ENCODE measurements at regions of chr17 and their contacts with region 1.

Region 1: DNA sequence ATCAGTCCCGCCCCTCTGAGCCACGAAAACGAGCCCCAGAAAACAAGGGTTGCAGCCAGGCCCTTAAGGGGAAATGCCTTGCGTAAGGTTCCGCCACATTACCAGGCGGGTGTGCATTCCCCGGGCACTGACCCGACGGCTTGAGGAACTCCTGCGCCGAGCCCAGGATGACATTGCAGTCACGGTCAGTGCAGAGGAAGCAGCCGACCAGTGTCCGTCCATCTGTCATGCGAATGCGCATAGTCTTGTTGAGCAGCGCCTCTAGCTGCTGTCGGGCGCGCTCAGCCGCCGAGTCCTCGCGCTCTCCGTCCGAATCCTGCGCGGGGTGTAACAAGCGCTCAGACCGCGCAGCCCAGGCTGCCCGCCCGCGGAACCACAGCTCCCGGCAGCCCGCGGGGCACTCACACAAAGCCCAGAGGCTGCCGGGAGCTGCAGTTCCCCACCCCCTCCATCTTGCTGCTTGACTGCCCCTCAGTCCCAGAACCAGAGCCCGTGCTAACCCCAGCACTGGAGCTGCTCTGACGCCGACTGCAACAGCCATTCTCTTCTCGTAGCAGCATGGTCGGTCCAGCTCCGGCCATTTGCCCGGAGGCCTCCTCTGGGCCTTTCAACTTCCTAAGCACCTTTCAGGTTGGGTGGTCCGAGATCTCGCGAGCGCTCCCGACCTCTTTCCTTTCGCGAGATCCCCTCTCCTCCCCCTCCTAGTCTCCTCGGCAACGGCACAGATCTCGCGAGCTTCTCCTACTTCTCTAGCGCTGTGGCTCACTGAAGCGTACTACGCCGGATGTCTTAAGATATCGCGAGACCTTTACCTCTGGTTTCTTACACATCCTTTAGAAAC is at the start of gene NAA38:
- DNase-seq: peak; percentile 78 to 95 (median 84)
- ATAC-seq: peak; percentile 93
- H3K4me3 ChIP-seq: peak within 1 kb of the TSS; percentile 65
- H3K27ac ChIP-seq: peak within 1 kb of the TSS; percentile 94
- H3K4me1 ChIP-seq: peaks cover 11 to 47% of the 10 kb centered on the region in 2 experiments; a peak in 4 of 5 replicates
- H3K27me3 ChIP-seq: no peaks in the 10 kb centered on the region
- CTCF ChIP-seq: peak; percentile 68 to 70 (median 69)
- EP300 ChIP-seq: no peak
- POLR2A ChIP-seq: peak; percentile 60; the same call in 1 of the 2 replicates
- RAD21 ChIP-seq: peak; percentile 36 to 63
- polyA plus RNA-seq, gene NAA38: 70.4 to 90.4 TPM

Region 2: DNA sequence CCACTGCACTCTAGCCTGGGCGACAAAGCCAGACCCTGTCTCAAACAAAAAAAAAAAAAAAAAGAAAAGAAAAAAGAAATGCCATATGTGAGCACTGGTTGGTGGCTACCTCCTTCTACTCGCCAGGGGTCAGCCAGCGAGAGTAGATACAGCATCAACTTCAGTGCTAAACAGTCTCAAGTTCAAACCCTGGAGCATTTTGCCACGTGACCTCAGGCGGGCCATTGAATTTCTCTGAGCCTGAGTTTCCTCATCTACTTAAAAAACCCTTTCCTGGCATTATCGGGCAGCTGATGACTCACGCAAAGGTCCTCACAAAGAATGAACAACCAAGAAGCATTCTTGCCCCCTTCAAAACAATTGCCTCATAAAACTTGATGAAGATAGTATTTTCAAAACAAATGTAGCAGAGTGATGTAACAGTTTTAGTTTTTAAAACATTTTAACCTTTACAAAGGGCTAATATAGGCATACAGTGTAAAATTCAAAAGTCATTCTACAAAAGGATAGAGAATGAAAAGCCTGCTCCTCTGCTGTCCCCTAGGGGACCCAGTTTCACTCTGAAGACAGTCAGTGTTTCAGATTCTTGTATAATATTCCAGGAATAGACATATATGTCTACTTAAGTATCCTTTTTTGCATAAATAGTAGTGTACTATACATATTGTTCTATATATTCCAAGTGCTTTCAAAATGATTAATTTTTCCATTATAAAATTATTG is 111.2 kb before region 1 on chr17:
- CTCF ChIA-PET with region 1: interaction called, 8 read pairs
- POLR2A ChIA-PET with region 1: no interaction called
- in situ Hi-C with region 1: no loop called
- intact Hi-C with region 1: loop called (anchors 10 kb)
- DNase-seq: peak in 2 of 4 experiments; percentile 11 to 33
- ATAC-seq: peak; percentile 72
- H3K4me3 ChIP-seq: no peak overlapping the region
- H3K27ac ChIP-seq: no peak overlapping the region
- H3K4me1 ChIP-seq: no peaks in the 10 kb centered on the region; a peak in 2 of 5 replicates
- H3K27me3 ChIP-seq: peaks cover under 1 to 13% of the 10 kb centered on the region in 2 experiments; a peak in 3 of 5 replicates
- CTCF ChIP-seq: peak in 1 of 3 experiments; percentile 16; a peak in 1 of 6 replicates
- EP300 ChIP-seq: no peak
- POLR2A ChIP-seq: no peak
- RAD21 ChIP-seq: no peak

Region 3: DNA sequence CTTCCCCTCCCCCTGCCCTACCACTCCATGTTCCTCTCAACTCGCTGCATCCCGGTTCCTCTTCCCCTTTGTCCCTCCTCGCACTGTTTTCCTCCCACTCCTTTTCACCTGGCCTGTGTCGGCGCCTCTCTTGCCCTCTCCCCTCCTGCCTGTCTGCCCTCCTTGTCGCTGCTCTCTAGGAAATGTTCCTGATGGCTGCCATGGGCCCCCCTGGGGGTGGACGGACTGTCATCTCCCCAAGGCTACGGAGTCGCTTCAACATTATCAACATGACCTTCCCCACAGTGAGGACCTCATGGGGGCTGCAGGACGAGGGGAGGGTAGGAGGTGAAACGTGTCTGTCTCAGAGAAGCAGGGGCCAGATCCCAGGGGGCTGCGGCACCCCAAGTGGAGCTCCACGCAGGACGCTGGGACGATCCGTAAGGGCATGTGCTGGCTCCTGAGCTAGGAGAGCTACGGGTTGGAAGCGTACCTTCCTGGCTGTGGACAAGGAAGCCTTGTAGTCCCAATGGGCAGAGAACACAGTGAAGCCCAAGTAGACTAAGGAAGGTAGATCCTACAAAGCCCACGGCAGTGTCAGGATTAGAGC is 62.9 kb before region 1 on chr17:
- CTCF ChIA-PET with region 1: no interaction called
- POLR2A ChIA-PET with region 1: no interaction called
- in situ Hi-C with region 1: no loop called
- intact Hi-C with region 1: no loop called
- DNase-seq: no peak
- ATAC-seq: no peak
- H3K4me3 ChIP-seq: no peak overlapping the region
- H3K27ac ChIP-seq: no peak overlapping the region
- H3K4me1 ChIP-seq: no peaks in the 10 kb centered on the region; a peak in 1 of 5 replicates
- H3K27me3 ChIP-seq: peaks cover 29 to 61% of the 10 kb centered on the region in 2 experiments
- CTCF ChIP-seq: no peak
- EP300 ChIP-seq: no peak
- POLR2A ChIP-seq: no peak
- RAD21 ChIP-seq: no peak

Region 4: DNA sequence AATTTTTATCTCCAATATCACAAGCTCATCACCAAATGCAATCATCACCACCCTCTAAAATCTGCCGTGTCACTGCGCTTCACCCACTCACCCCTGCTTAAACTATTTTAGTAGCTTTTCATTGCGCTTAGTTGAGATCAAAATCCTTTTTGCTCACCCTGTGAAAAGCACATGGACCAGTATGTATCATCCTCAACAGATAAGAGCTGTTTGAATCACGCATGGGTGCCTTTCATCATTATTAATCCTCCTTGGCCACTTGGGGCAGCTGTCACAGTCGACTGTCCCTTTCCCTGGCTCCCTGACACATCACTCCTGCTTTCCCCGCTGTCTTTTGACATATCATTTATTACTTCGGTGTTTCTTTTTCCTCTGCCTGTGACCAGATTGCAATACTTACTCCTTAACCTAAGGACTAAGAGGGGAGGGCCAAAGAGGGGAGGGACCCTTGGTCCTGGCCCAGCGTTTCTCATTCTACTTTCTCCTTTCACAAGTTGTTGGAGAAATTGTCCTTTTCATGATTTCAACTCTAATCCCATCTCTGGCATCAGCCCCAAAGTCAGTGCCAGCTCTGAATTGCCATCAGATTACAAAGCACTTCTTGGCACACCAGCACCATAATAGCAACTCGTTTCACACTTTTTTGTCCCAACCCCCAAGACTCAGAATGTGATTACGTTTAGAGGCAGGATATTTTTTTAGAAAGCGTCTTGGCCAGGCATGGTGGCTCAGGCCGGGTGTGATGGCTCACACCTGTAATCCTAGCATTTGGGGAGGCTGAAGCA is 31.7 kb before region 1 on chr17:
- CTCF ChIA-PET with region 1: interaction called, 8 read pairs
- POLR2A ChIA-PET with region 1: no interaction called
- in situ Hi-C with region 1: no loop called
- intact Hi-C with region 1: loop called (anchors 5 kb)
- DNase-seq: peak in 1 of 4 experiments; percentile 29
- ATAC-seq: 0 out of 3 replicates have a peak, but pooled peaks have one; percentile 47
- H3K4me3 ChIP-seq: no peak overlapping the region
- H3K27ac ChIP-seq: no peak overlapping the region
- H3K4me1 ChIP-seq: peaks cover 0 to 9% of the 10 kb centered on the region in 2 experiments; a peak in 2 of 5 replicates
- H3K27me3 ChIP-seq: peaks cover 9 to 32% of the 10 kb centered on the region in 2 experiments; a peak in 4 of 5 replicates
- CTCF ChIP-seq: peak; percentile 16 to 42 (median 35); a peak in 3 of 6 replicates
- EP300 ChIP-seq: no peak
- POLR2A ChIP-seq: no peak
- RAD21 ChIP-seq: no peak

Region 5: DNA sequence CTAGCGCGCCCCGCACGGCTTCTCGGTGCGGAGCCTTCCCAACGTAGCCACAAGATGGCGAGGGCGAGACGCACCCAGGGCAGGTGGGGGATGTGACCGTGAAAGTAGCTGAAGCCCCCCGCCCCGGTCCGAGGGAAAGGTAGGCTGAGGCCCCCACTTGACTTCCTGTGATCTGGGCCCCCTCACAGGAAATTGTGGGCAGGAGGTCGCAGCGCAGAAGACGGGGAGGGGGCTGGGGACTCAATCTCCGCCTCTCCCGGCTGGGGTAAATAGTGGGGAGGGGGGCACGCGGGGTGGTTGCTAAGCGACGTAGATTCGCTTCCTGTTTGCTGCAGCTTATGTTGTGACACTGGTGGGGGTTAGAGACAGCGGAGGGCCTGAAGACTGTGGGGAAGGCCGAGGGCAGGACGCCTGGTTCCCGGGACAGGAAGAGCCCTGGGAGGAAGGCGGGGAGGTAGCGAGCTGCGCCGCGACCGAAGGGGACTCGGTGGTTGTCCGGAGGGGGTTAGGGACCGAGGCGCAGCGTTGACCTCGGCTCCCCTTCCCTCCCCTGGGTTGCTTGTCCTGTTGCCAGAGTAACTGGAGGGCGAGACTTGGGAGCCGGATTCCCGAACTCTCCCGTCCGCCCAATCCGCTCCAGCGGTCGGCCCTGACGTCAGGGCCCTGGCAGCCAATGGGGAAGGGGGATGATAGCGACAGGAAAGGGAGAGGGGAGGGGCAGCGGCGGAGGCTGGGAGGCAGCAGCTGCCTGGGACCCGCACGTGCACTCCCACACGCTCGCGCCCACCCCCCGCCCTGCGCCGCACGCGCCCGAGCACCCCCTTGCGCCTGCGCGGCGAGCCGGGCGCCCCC is 21.9 kb before region 1 on chr17:
- CTCF ChIA-PET with region 1: no interaction called
- POLR2A ChIA-PET with region 1: interaction called, 4 read pairs
- in situ Hi-C with region 1: no loop called
- intact Hi-C with region 1: loop called (anchors 1 kb)
- DNase-seq: peak; percentile 84 to 96 (median 90)
- ATAC-seq: peak; percentile 65
- H3K4me3 ChIP-seq: peak overlapping the region; percentile 65
- H3K27ac ChIP-seq: peak overlapping the region; percentile 85
- H3K4me1 ChIP-seq: peaks cover 34 to 50% of the 10 kb centered on the region in 2 experiments
- H3K27me3 ChIP-seq: peaks cover 8 to 14% of the 10 kb centered on the region in 2 experiments; a peak in 4 of 5 replicates
- CTCF ChIP-seq: peak; percentile 60 to 90 (median 65)
- EP300 ChIP-seq: 0 out of 2 replicates have a peak, but pooled peaks have one; percentile 16
- POLR2A ChIP-seq: 0 out of 2 replicates have a peak, but pooled peaks have one; percentile 1
- RAD21 ChIP-seq: peak; percentile 43 to 77

Region 6: DNA sequence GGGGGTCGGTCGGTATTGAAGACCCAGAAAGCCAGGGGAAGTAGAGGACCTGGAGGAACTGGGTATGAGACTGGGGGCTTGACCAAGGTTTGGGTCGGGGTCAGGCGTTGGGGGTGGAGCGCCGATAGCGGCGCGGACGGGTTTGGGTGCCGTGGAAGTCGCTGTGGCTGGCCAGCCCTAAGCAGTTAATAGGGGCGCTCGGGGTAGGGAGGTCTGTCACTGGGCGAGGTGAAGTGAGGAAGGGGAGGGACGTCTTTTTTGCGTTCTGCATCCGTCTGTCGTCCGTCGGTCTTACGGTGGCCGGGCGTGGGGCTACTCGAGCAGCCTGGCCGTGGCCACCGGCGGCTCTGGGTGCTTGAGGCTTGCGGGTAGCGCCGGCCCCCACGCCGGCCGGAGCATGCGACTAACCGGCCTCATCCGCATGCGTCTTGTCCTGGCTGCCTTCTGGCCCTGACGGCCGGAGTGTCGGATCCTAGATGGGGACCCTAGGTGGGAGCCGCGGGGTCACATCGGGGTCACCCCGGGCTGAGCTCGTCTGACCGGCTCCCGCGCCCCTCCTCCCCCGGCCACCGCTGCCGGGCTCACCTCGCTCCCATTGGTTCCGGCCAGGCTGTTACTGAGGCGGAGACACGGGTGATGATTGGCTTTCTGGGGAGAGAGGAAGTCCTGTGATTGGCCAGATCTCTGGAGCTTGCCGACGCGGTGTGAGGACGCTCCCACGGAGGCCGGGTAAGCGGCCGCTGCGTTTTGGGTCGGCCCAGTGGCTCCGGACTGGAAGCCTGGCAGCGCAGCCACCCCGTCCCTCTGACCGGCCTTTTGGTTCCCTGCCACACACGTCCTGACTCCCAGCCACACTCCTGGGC is 12.6 kb before region 1 on chr17:
- CTCF ChIA-PET with region 1: no interaction called
- POLR2A ChIA-PET with region 1: interaction called, 14 read pairs
- in situ Hi-C with region 1: no loop called
- intact Hi-C with region 1: no loop called
- DNase-seq: peak; percentile 75 to 92 (median 84)
- ATAC-seq: peak; percentile 81
- H3K4me3 ChIP-seq: peak overlapping the region; percentile 76
- H3K27ac ChIP-seq: peak overlapping the region; percentile 99
- H3K4me1 ChIP-seq: peaks cover 18 to 45% of the 10 kb centered on the region in 2 experiments; a peak in 4 of 5 replicates
- H3K27me3 ChIP-seq: no peaks in the 10 kb centered on the region
- CTCF ChIP-seq: no peak
- EP300 ChIP-seq: no peak
- POLR2A ChIP-seq: peak; percentile 79
- RAD21 ChIP-seq: no peak

Region 7: DNA sequence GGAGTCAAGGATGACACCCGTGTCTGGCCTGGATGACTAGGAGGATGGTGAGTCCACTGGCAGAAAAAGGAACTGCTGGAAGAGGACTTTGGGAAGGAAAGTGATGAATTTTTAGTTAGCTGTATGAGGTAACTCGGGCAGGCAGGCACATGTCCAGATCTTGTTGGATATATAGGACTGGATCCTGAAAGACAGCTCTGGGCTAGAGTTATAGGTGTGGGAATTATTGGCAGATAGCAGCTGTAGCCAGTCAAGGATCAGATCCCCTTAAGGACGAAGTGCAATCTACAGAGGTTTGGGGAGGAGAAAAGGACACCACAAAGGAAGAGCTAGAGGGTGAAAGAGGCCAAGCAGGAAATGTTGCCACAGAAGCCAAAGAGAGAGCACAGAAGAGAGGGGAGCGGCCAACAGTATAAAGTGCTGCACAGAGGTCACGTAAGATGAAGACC is 10.8 kb after region 1 on chr17:
- CTCF ChIA-PET with region 1: no interaction called
- POLR2A ChIA-PET with region 1: interaction called, 17 read pairs
- in situ Hi-C with region 1: no loop called
- intact Hi-C with region 1: no loop called
- DNase-seq: no peak
- ATAC-seq: no peak
- H3K4me3 ChIP-seq: no peak overlapping the region
- H3K27ac ChIP-seq: no peak overlapping the region
- H3K4me1 ChIP-seq: no peaks in the 10 kb centered on the region; a peak in 1 of 5 replicates
- H3K27me3 ChIP-seq: no peaks in the 10 kb centered on the region
- CTCF ChIP-seq: no peak
- EP300 ChIP-seq: no peak
- POLR2A ChIP-seq: no peak
- RAD21 ChIP-seq: no peak

Region 8: GRCh38 chr17:7887482-7888183 is 30.5 kb after region 1 on chr17:
- CTCF ChIA-PET with region 1: interaction called, 5 read pairs
- POLR2A ChIA-PET with region 1: interaction called, 3 read pairs
- in situ Hi-C with region 1: no loop called
- intact Hi-C with region 1: loop called (anchors 2 kb)
- DNase-seq: peak; percentile 81 to 92 (median 88)
- ATAC-seq: peak; percentile 91
- H3K4me3 ChIP-seq: peak overlapping the region; percentile 66
- H3K27ac ChIP-seq: peak overlapping the region; percentile 97
- H3K4me1 ChIP-seq: peaks cover 21 to 31% of the 10 kb centered on the region in 2 experiments; a peak in 4 of 5 replicates
- H3K27me3 ChIP-seq: no peaks in the 10 kb centered on the region
- CTCF ChIP-seq: no peak
- EP300 ChIP-seq: no peak
- POLR2A ChIP-seq: no peak
- RAD21 ChIP-seq: no peak

Measured in K562 (cell line).